Activated naive CD4-positive, alpha-beta T cell treated with anti-CD3 and anti-CD28 coated beads for 36 hours (primary cell): ENCODE measurements at regions of chr21 and their contacts with region 1.

Region 1: GRCh38 chr21:15764878-15765277 is 35.1 kb downstream of the USP25 start:
- DNase-seq: no peak
- H3K4me3 Mint-ChIP-seq: no peak overlapping the region
- H3K27ac Mint-ChIP-seq: no peak overlapping the region
- H3K4me1 Mint-ChIP-seq: peaks cover 59% of the 10 kb centered on the region
- H3K27me3 Mint-ChIP-seq: no peaks in the 10 kb centered on the region

Region 2: DNA sequence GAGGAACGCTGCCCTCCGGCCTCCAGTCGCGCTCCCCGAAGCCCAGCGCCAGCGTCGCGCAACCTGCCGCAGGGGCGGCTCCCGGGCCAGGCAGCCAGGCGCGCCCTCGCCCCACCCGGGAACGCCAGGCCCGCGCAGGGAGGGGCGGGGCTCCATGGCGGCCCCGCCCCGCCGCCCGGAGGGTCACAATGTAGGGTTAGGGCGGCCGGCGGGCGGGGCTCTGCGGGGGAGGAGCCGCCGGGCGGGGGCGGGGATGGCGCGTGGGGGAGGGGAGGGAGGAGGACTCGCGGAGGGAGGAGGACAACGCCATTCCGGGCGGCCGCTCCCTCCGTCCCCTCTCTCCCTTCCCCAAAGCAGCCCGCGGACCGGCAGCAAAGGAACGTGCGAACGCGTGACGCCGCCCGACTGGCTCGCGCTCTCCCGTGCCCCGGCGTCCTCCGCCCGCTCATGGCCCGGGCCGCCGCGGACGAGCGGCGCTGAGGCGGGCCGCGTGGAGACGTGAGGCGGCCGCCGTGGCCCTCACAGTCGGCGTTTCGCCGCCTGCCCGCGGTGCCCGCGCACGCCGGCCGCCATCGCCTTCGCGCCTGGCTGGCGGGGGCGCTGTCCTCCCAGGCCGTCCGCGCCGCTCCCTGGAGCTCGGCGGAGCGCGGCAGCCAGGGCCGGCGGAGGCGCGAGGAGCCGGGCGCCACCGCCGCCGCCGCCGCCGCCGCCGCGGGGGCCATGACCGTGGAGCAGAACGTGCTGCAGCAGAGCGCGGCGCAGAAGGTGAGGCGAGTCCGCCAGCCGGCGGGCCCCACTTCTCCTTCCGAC is 35.0 kb before region 1 on chr21 and contains the start of gene USP25:
- CTCF ChIA-PET with region 1: no interaction called
- intact Hi-C with region 1: no loop called
- DNase-seq: peak; percentile 77
- H3K4me3 Mint-ChIP-seq: peak within 1 kb of the TSS; percentile 91
- H3K27ac Mint-ChIP-seq: peak within 1 kb of the TSS; percentile 83
- H3K4me1 Mint-ChIP-seq: peaks cover 24% of the 10 kb centered on the region
- H3K27me3 Mint-ChIP-seq: peaks cover 2% of the 10 kb centered on the region
- total RNA-seq, gene USP25: 24.7 to 27.8 TPM

Region 3: GRCh38 chr21:15742052-15742670 is 22.7 kb before region 1 on chr21:
- CTCF ChIA-PET with region 1: no interaction called
- intact Hi-C with region 1: loop called (anchors 2 kb)
- DNase-seq: no peak
- H3K4me3 Mint-ChIP-seq: no peak overlapping the region
- H3K27ac Mint-ChIP-seq: peak overlapping the region; percentile 61
- H3K4me1 Mint-ChIP-seq: peaks cover 74% of the 10 kb centered on the region
- H3K27me3 Mint-ChIP-seq: no peaks in the 10 kb centered on the region

Region 4: DNA sequence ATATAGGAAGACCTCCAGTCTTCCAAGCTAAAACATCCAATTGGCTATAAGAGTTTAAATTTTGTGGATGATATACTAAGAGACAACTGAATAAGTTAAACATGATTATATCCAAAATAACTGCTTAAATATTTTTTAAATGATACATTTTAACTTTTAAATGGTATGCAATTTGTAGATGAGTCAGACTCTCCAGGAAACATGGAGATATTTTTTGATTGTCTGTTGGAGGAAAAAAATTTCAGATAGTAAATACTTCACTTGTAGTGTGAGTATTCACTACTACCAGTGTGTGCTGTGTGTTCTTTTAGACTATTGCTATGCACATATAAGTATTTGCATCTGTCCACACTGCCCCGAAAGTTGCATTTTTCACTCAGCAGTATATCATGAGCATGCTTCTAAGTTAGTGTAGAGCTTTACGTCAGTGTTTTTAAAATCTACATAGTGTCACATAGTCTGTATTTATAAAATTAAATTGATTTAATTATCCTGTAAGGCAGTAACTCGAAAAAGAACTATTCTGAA is 56.0 kb after region 1 on chr21:
- CTCF ChIA-PET with region 1: no interaction called
- intact Hi-C with region 1: no loop called
- DNase-seq: no peak
- H3K4me3 Mint-ChIP-seq: no peak overlapping the region
- H3K27ac Mint-ChIP-seq: no peak overlapping the region
- H3K4me1 Mint-ChIP-seq: peaks cover 30% of the 10 kb centered on the region
- H3K27me3 Mint-ChIP-seq: no peaks in the 10 kb centered on the region

Region 5: GRCh38 chr21:15992171-15992570 is 227.3 kb after region 1 on chr21:
- CTCF ChIA-PET with region 1: no interaction called
- intact Hi-C with region 1: no loop called
- DNase-seq: no peak
- H3K4me3 Mint-ChIP-seq: no peak overlapping the region
- H3K27ac Mint-ChIP-seq: no peak overlapping the region
- H3K4me1 Mint-ChIP-seq: no peaks in the 10 kb centered on the region
- H3K27me3 Mint-ChIP-seq: no peaks in the 10 kb centered on the region